ENCODE measurements at regions of chr3 and their contacts with region 1.

Region 1: GRCh38 chr3:133934073-133934970 is 38.6 kb upstream of the RAB6B start:
- DNase-seq: no peak
- H3K4me3 ChIP-seq: no peak overlapping the region
- H3K27me3 ChIP-seq: peaks cover 6% of the 10 kb centered on the region; the same call in 1 of the 2 replicates
- CTCF ChIP-seq: no peak

Region 2: GRCh38 chr3:134059671-134060560 is 125.6 kb after region 1 on chr3:
- CTCF ChIA-PET with region 1: interaction called, 12 read pairs
- POLR2A ChIA-PET with region 1: no interaction called
- DNase-seq: no peak
- H3K4me3 ChIP-seq: no peak overlapping the region
- H3K27me3 ChIP-seq: peaks cover 4% of the 10 kb centered on the region; the same call in 1 of the 2 replicates
- CTCF ChIP-seq: no peak

Measured in BJ (cell line).